ENCODE measurements at regions of chr4 and their contacts with region 1.

Region 1: DNA sequence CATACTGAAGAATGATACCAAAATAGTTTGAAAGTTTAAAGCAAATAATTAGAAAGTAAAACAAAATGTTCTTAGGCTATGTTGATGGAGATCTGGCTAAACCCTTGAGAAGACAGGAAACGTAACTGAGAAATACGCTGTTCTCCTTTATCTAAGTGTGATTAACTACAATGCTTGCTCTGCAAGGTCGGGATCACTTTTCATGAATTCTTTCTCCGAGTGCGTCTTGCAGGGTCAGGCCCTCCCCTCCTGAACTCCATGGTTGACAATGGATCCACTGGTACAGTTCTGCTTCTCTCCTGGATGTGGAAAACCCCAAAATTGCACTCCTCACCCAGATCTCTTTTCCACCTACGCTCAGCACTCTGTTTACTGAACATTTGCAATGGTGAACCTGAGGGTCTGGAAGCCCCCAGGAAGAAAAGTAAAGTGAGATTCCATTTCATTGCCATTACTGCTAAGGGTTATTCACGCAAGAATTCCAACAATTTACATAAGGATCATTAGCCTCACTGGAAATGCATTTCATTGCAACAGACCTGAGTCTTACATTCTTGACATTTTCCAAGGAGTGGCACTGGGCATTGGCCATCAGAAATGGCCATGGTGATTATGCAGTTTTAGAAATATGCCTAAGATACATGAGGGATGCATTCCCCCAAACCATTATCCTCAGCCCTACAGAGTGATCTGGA is 24.6 kb upstream of the WWC2 start:
- DNase-seq: no peak
- ATAC-seq: no peak
- H3K4me3 ChIP-seq: no peak overlapping the region
- H3K27ac ChIP-seq: no peak overlapping the region
- H3K4me1 ChIP-seq: no peaks in the 10 kb centered on the region
- H3K27me3 ChIP-seq: no peaks in the 10 kb centered on the region
- CTCF ChIP-seq: no peak

Region 2: GRCh38 chr4:183249857-183250256 is 175.4 kb after region 1 on chr4:
- CTCF ChIA-PET with region 1: interaction called, 12 read pairs
- POLR2A ChIA-PET with region 1: no interaction called
- intact Hi-C with region 1: loop called (anchors 1 kb)
- DNase-seq: peak; percentile 50
- ATAC-seq: peak; percentile 79
- H3K4me3 ChIP-seq: no peak overlapping the region
- H3K27ac ChIP-seq: no peak overlapping the region
- H3K4me1 ChIP-seq: peaks cover 18% of the 10 kb centered on the region
- H3K27me3 ChIP-seq: no peaks in the 10 kb centered on the region
- CTCF ChIP-seq: peak; percentile 62

Region 3: DNA sequence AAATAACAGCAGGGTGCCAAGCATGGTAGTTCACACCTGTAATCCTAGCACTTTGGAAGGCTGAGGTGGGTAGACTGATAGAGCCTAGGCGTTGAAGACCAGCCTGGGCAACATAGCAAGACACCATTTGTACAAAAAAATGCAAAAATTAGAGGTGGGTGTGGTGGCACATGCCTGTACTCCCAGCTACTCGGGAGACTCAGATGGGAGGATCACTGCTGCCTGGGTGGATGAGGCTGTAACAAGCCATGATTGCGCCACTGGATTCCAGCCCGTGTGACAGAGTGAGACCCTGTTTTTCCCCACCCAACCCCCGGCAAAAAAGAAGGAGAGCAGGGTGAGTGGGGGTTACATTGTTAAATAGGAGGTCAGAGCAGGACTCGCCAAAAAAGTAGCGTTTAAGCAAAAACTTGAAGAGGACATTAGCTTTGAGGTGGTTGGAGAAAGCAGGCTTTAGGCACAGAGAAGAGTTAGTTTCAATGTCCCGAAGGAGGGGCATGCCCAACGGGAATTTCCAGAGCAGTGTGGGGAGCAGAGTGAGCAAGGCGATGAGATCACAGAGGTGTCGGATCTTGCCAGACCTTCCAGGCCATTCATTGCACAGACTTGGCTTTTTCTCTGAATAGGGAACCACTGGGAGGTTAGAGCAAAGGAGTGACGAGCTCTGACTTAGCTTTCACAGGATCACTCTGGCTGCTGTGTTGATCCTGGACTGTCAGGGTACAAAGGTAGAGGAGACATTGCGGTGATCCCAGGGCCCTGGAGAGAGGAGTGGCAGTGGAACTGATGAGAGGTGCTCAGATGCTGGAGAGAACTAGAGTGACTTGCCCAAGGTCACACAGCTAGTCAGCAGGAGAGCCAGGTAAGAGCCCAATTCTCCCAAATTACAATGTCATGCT is 655.2 kb after region 1 on chr4:
- CTCF ChIA-PET with region 1: no interaction called
- POLR2A ChIA-PET with region 1: no interaction called
- intact Hi-C with region 1: no loop called
- DNase-seq: no peak
- ATAC-seq: no peak
- H3K4me3 ChIP-seq: no peak overlapping the region
- H3K27ac ChIP-seq: no peak overlapping the region
- H3K4me1 ChIP-seq: no peaks in the 10 kb centered on the region
- H3K27me3 ChIP-seq: no peaks in the 10 kb centered on the region
- CTCF ChIP-seq: no peak